ENCODE measurements at regions of chr1 and their contacts with region 1.

Region 1: DNA sequence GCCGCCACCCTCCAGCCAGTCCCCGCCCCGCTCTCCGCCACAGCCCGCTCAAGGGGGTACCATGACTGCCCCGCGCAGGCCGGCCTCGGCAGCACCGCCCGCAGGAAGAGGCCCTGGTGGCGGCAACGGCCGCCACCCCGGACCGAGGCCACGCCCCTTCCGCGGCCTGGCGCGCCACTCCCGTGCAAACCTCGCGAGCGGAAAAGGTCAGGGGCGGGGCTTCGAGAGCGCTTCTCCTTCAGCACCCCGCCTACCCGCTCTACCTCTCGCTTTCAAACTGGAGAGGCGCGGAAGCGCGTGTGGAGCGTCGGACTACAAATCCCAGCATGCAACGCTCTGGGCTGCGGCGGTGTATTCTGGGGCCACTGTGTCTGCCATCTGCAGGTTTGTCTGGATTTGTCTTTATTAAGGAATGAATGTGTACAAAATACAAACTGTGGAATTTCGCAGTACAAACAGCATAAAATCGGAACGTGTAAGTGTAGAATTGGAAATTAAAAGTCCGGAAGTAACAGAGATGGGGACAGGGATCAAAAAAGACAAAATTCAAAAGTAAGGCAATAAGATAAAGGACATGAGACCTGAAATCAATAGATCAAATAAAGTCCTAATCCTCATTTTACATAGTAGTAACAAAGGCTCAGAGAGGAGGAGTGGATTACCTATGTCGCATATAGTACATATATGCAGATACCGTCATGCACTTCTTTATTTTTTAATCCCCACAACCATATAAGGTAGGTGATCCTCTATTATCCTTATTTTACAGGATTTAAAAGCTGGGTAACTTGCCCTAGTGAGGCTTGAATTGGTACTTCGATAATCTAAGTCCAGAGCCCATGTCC is 464 bp upstream of the ADSS2 start:
- DNase-seq: peak; percentile 100
- H3K4me3 Mint-ChIP-seq: peak overlapping the region; percentile 70
- H3K27ac Mint-ChIP-seq: peak overlapping the region; percentile 66
- H3K4me1 Mint-ChIP-seq: peaks cover 39% of the 10 kb centered on the region
- H3K27me3 Mint-ChIP-seq: no peaks in the 10 kb centered on the region
- CTCF ChIP-seq: peak; percentile 45

Region 2: GRCh38 chr1:244296447-244296846 is 155.7 kb before region 1 on chr1:
- CTCF ChIA-PET with region 1: interaction called, 10 read pairs
- POLR2A ChIA-PET with region 1: interaction called, 6 read pairs
- intact Hi-C with region 1: loop called (anchors 2 kb)
- DNase-seq: no peak
- H3K4me3 Mint-ChIP-seq: no peak overlapping the region
- H3K27ac Mint-ChIP-seq: peak overlapping the region; percentile 36
- H3K4me1 Mint-ChIP-seq: peaks cover 8% of the 10 kb centered on the region
- H3K27me3 Mint-ChIP-seq: no peaks in the 10 kb centered on the region
- CTCF ChIP-seq: no peak

Region 3: GRCh38 chr1:244353551-244354091 is 98.6 kb before region 1 on chr1:
- CTCF ChIA-PET with region 1: no interaction called
- POLR2A ChIA-PET with region 1: interaction called, 6 read pairs
- intact Hi-C with region 1: loop called (anchors 5 kb)
- DNase-seq: peak; percentile 99
- H3K4me3 Mint-ChIP-seq: no peak overlapping the region
- H3K27ac Mint-ChIP-seq: peak overlapping the region; percentile 97
- H3K4me1 Mint-ChIP-seq: peaks cover 43% of the 10 kb centered on the region
- H3K27me3 Mint-ChIP-seq: no peaks in the 10 kb centered on the region
- CTCF ChIP-seq: no peak

Region 4: DNA sequence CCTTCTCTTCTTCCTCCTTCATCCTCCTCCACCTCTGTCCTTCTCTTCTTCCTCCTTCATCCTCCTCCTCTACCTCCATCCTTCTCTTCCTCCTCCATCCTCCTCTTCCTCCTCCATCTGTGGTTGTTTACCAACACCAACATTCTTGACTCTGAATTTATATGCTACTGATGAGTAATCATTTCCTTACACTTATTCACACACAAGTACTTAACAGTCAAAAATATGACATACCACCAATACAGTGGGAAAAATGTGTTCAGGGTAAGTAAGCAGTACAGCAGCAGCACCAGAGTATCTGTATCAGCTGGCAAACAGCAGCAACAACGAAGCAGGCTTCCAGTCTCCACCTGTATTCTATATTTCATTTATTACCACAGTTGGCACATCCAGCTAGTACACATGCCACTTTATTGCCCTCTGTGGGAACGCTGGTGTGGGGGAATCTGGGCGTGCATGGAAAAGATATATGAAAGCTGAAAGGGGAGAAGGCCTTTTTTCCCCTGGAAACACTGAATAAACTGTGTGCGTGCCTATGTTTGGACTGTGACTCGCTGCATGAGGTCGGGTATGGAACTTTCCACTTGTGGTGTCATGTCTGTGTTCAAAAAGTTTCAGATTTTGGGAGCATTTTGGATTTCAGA is 16.5 kb before region 1 on chr1:
- CTCF ChIA-PET with region 1: interaction called, 5 read pairs
- POLR2A ChIA-PET with region 1: interaction called, 61 read pairs
- intact Hi-C with region 1: no loop called
- DNase-seq: peak; percentile 73
- H3K4me3 Mint-ChIP-seq: peak overlapping the region; percentile 55
- H3K27ac Mint-ChIP-seq: peak overlapping the region; percentile 76
- H3K4me1 Mint-ChIP-seq: peaks cover 59% of the 10 kb centered on the region
- H3K27me3 Mint-ChIP-seq: no peaks in the 10 kb centered on the region
- CTCF ChIP-seq: no peak

Region 5: DNA sequence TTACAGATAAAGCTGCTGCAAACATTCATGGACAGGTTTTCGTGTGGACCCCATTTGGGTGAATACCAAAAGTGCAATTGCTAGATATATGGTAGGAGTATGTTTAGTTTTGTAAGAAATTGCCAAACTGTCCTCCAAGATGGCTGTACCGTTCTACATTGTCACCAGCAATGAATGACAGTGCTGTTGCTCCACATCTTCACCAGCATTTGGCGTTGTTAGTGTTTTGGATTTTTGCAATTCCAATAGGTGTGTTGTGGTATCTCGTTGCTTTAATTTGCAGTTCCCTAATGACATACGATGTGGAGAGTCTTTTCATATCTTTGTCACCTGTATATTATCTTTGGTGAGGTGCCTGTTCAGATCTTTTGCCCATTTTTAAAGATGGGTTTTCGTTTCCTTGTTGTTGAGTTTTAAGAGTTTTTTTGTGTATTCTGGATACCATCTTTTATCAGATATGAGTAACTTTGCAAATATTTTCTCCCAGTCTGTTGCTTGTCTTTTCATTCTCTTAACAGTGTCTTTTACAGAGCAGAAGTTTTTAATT is 21.0 kb after region 1 on chr1:
- CTCF ChIA-PET with region 1: no interaction called
- POLR2A ChIA-PET with region 1: no interaction called
- intact Hi-C with region 1: no loop called
- DNase-seq: no peak
- H3K4me3 Mint-ChIP-seq: no peak overlapping the region
- H3K27ac Mint-ChIP-seq: no peak overlapping the region
- H3K4me1 Mint-ChIP-seq: no peaks in the 10 kb centered on the region
- H3K27me3 Mint-ChIP-seq: no peaks in the 10 kb centered on the region
- CTCF ChIP-seq: no peak

Region 6: GRCh38 chr1:244642526-244642925 is 190.4 kb after region 1 on chr1:
- CTCF ChIA-PET with region 1: no interaction called
- POLR2A ChIA-PET with region 1: no interaction called
- intact Hi-C with region 1: no loop called
- DNase-seq: no peak
- H3K4me3 Mint-ChIP-seq: no peak overlapping the region
- H3K27ac Mint-ChIP-seq: no peak overlapping the region
- H3K4me1 Mint-ChIP-seq: no peaks in the 10 kb centered on the region
- H3K27me3 Mint-ChIP-seq: peaks cover 21% of the 10 kb centered on the region
- CTCF ChIP-seq: no peak

Region 7: DNA sequence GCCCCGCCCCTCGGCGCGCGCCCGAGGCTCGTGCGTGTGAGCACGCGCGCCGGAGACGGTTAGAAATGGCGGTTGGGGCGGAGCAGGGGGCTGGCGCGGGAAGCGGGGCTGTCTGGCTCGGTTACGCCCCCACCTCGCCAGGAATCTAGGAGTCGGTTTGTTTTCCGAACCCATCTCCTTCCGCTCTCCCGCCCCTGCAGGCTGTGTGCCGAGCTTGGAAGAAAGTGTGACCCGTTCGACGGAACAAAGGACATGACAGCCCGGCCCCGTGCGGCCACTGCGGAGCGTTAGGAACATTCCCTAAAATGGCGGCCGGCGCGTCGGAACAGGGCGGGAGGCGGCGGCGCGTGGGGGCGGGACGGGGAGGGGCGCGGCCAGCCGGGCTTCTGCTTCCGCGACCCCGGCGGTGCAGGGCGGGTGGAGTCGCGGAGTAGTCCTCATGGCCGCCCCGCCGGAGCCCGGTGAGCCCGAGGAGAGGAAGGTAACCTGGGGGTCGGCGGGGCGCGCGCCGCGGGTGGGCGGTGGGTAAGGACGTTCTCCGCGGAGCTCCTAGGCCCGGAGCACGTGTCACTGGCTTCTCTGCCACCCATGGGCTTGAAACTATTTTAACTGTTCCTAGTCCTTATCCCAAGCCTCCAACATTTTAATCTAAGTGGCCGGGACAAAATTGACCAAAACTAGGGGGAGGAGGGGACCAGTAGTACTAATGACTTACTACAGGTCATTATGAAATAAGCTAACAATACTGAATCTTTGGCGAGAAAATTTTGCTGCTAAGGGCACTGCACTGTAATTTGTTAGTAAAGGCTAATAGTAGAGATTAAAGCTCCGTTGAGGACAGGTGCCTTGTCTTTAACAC is 383.3 kb after region 1 on chr1 and contains the start of gene COX20:
- CTCF ChIA-PET with region 1: no interaction called
- POLR2A ChIA-PET with region 1: interaction called, 15 read pairs
- intact Hi-C with region 1: loop called (anchors 10 kb)
- DNase-seq: peak; percentile 98
- H3K4me3 Mint-ChIP-seq: peak within 1 kb of the TSS; percentile 81
- H3K27ac Mint-ChIP-seq: peak within 1 kb of the TSS; percentile 99
- H3K4me1 Mint-ChIP-seq: peaks cover 33% of the 10 kb centered on the region
- H3K27me3 Mint-ChIP-seq: no peaks in the 10 kb centered on the region
- CTCF ChIP-seq: no peak
- total RNA-seq, gene COX20: 44.6 and 46.1 TPM in 2 replicates